ENCODE measurements at regions of chr10 and their contacts with region 1.

Region 1: GRCh38 chr10:112967200-112967599 is 17.2 kb downstream of the TCF7L2 start:
- DNase-seq: no peak
- H3K4me3 ChIP-seq: no peak overlapping the region
- H3K27ac ChIP-seq: no peak overlapping the region
- H3K4me1 ChIP-seq: no peaks in the 10 kb centered on the region
- CTCF ChIP-seq: no peak

Region 2: GRCh38 chr10:112986544-112987175 is 19.5 kb after region 1 on chr10:
- CTCF ChIA-PET with region 1: no interaction called
- POLR2A ChIA-PET with region 1: interaction called, 10 read pairs
- intact Hi-C with region 1: no loop called
- DNase-seq: no peak
- H3K4me3 ChIP-seq: no peak overlapping the region
- H3K27ac ChIP-seq: no peak overlapping the region
- H3K4me1 ChIP-seq: peaks cover 18% of the 10 kb centered on the region
- CTCF ChIP-seq: no peak

Region 3: GRCh38 chr10:113527211-113527906 is 560.2 kb after region 1 on chr10:
- CTCF ChIA-PET with region 1: no interaction called
- POLR2A ChIA-PET with region 1: no interaction called
- intact Hi-C with region 1: no loop called
- DNase-seq: no peak
- H3K4me3 ChIP-seq: no peak overlapping the region
- H3K27ac ChIP-seq: no peak overlapping the region
- H3K4me1 ChIP-seq: no peaks in the 10 kb centered on the region
- CTCF ChIP-seq: no peak